ENCODE measurements at regions of chr17 and their contacts with region 1.

Region 1: DNA sequence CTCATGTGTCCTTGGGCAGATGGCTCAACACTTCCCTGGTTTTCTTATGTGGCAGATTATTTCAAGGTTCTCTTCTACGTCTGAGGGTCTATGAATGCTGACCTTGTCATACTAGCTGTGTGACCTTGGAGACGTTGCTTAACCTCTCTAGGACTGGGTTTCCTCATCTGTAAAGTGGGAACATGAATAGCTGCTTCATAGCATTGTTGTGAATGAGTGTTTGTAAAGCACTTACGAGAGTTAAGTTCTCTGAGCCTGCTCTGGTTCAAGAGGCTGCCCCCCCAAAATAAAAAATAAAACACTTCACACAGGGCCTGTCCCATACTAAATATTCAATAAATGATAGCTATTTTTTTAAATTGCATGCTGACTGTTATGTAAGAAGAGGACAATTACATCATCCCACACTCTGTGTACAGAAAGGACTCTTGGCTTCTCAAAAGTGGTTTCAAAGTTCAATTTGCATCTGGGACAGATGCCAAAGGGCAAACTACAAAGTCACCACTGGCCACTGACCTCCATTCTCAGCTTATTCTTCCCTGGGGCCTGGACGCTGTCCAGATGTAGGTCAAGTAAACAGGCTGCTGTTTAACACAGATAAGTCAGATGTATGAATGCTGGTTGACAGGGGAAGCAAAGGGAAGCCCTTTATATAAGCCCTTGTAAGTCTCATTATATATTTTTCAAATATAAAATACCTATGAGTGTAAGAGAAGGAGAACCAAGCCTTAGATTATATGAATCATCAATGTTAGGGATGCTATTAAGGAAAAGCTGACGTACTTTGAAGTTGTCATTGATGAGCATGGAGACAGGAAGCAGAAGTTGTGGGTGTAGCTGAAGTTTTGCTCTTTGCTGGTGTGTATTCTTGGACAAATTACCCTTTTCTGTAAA is 15.4 kb upstream of the NDEL1 start:
- DNase-seq: peak; percentile 72 to 96 (median 76)
- ATAC-seq: peak; percentile 88
- H3K4me3 ChIP-seq: no peak overlapping the region
- H3K27ac ChIP-seq: peak overlapping the region; percentile 86
- H3K4me1 ChIP-seq: peaks cover 0 to 25% of the 10 kb centered on the region in 2 experiments; a peak in 3 of 5 replicates
- H3K27me3 ChIP-seq: no peaks in the 10 kb centered on the region
- CTCF ChIP-seq: no peak
- EP300 ChIP-seq: peak; percentile 90
- POLR2A ChIP-seq: no peak
- RAD21 ChIP-seq: no peak

Region 2: GRCh38 chr17:8430966-8431365 is 10.7 kb after region 1 on chr17:
- CTCF ChIA-PET with region 1: no interaction called
- POLR2A ChIA-PET with region 1: interaction called, 12 read pairs
- in situ Hi-C with region 1: no loop called
- intact Hi-C with region 1: no loop called
- DNase-seq: no peak
- ATAC-seq: no peak
- H3K4me3 ChIP-seq: no peak overlapping the region
- H3K27ac ChIP-seq: no peak overlapping the region
- H3K4me1 ChIP-seq: peaks cover 0 to 2% of the 10 kb centered on the region in 2 experiments; a peak in 2 of 5 replicates
- H3K27me3 ChIP-seq: no peaks in the 10 kb centered on the region
- CTCF ChIP-seq: no peak
- EP300 ChIP-seq: no peak
- POLR2A ChIP-seq: no peak
- RAD21 ChIP-seq: no peak

Region 3: GRCh38 chr17:8436169-8436843 is 16.0 kb after region 1 on chr17:
- CTCF ChIA-PET with region 1: no interaction called
- POLR2A ChIA-PET with region 1: interaction called, 12 read pairs
- in situ Hi-C with region 1: no loop called
- intact Hi-C with region 1: no loop called
- DNase-seq: peak; percentile 22 to 66 (median 40)
- ATAC-seq: peak; percentile 61
- H3K4me3 ChIP-seq: peak overlapping the region; percentile 96
- H3K27ac ChIP-seq: peak overlapping the region; percentile 95
- H3K4me1 ChIP-seq: peaks cover 0 to 7% of the 10 kb centered on the region in 2 experiments; a peak in 4 of 5 replicates
- H3K27me3 ChIP-seq: no peaks in the 10 kb centered on the region
- CTCF ChIP-seq: no peak
- EP300 ChIP-seq: 0 out of 2 replicates have a peak, but pooled peaks have one; percentile 36
- POLR2A ChIP-seq: no peak
- RAD21 ChIP-seq: no peak

Measured in K562 (cell line).